Activated T-helper 1 cell treated with anti-CD3 and anti-CD28 coated beads, Interleukin-12 subunit alpha, Interleukin-12 subunit beta, Interleukin-2, Interleukin-4 antibody, amounts not matched to agents 30 ng/mL and 10 ng/mL and 1 ng/mL, durations not matched to agents 14 hours and 24 hours and 36 hours (primary cell): ENCODE measurements at regions of chr3 and their contacts with region 1.

Region 1: DNA sequence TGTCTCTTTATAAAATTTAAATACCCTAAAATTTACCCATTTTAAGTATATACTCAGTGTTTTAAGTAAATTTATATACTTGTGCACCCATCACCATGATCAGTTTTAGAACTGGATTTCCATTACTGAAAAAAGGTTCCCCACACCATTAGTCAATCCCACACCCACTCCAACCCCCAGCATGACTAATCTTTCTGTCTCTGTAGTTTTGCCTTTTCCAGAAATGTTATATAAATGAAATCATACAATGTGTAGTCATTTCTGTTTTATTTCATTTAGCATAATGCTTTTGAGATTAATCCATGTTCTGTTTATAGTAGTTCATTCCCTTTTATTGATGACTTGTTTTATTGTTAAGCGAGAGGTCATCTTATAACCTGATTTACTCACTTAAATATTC is 66.1 kb upstream of the LIMD1 start:
- DNase-seq: no peak
- H3K4me3 Mint-ChIP-seq: no peak overlapping the region
- H3K27ac Mint-ChIP-seq: peak overlapping the region; percentile 67
- H3K4me1 Mint-ChIP-seq: peaks cover 11% of the 10 kb centered on the region
- H3K27me3 Mint-ChIP-seq: no peaks in the 10 kb centered on the region

Region 2: GRCh38 chr3:45567730-45568172 is 39.3 kb after region 1 on chr3:
- intact Hi-C with region 1: loop called (anchors 5 kb)
- DNase-seq: peak; percentile 41
- H3K4me3 Mint-ChIP-seq: peak overlapping the region; percentile 59
- H3K27ac Mint-ChIP-seq: peak overlapping the region; percentile 84
- H3K4me1 Mint-ChIP-seq: peaks cover 71% of the 10 kb centered on the region
- H3K27me3 Mint-ChIP-seq: peaks cover 9% of the 10 kb centered on the region

Region 3: GRCh38 chr3:45730409-45731154 is 202.2 kb after region 1 on chr3:
- intact Hi-C with region 1: no loop called
- DNase-seq: no peak
- H3K4me3 Mint-ChIP-seq: no peak overlapping the region
- H3K27ac Mint-ChIP-seq: no peak overlapping the region
- H3K4me1 Mint-ChIP-seq: peaks cover 13% of the 10 kb centered on the region
- H3K27me3 Mint-ChIP-seq: no peaks in the 10 kb centered on the region